ENCODE measurements at regions of chr2 and their contacts with region 1.

Region 1: GRCh38 chr2:239401067-239401880 is 454 bp upstream of the HDAC4 start:
- DNase-seq: peak; percentile 99
- H3K4me3 ChIP-seq: peak overlapping the region; percentile 67 to 75 (median 71)
- H3K27ac ChIP-seq: peak overlapping the region; percentile 100
- H3K4me1 ChIP-seq: peaks cover 14% of the 10 kb centered on the region
- H3K27me3 ChIP-seq: no peaks in the 10 kb centered on the region
- CTCF ChIP-seq: no peak
- POLR2A ChIP-seq: peak; percentile 97

Region 2: DNA sequence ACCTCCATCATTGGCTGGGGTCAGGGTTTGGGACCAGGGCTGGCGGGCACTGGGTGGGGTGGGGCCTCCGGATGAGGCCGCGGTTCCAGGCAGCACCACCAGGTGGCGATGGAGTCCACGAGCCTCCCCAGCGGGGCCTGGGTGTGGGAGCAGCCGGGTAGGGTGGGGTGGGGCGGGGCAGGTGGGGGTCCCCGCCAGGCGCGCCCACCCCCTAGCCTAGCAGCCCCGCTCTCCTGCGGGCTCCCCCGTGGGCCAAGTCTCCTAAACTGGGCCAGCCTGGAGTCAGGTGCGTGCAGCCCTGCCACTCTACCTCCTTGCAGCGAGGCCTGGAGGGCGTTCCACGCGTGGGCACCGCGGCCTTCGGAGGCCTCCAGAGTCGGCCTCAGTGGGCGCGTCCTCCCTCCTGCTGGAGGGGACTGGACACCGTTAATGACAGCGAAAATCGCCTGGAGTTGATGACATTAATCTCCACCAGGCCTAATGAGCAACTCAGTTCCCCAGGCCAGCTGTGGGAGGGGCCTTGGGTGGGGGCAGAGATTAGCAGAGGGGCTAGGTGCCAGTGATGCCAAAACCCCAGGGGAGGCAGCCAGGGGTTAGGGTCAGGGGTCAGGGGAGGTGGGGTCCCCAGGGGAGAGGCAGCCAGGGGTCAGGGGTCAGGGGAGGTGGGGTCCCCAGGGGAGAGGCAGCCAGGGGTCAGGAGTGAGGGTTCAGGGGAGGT is 365.8 kb before region 1 on chr2:
- CTCF ChIA-PET with region 1: no interaction called
- POLR2A ChIA-PET with region 1: no interaction called
- dilution Hi-C with region 1: no loop called
- intact Hi-C with region 1: loop called (anchors 10 kb)
- DNase-seq: no peak
- H3K4me3 ChIP-seq: no peak overlapping the region
- H3K27ac ChIP-seq: no peak overlapping the region
- H3K4me1 ChIP-seq: no peaks in the 10 kb centered on the region
- H3K27me3 ChIP-seq: peaks cover 0 to 3% of the 10 kb centered on the region in 2 experiments
- CTCF ChIP-seq: peak; percentile 38 to 92
- POLR2A ChIP-seq: no peak

Region 3: DNA sequence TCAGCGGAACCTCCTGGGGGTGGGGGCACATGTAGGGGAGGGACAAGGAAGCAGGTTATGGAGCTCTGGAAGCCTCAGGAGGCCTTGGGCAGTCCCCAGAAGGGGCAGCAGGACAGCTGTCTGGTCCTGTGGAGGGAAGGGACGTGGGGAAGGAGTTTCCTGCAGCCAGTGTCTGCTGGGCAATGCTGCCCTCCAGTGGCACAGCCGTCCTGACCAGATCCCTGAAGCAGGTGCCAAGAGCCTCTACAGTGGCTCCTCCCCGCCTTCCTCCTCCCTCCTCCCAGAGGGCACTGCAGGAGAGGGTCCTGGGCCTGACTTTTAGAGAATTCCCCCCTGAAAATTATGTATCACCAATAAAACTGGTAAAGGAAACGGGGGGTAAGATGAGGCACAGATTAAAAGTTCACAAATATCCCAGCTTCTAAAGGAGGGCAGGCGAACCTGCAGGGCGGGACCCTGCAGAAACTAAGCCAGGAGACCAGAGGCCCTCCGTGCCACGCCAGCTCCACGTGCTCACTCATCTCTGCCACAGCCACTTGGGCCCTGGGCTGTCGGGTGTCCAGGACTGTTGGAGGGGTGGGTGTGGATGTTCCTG is 294.9 kb before region 1 on chr2:
- CTCF ChIA-PET with region 1: no interaction called
- POLR2A ChIA-PET with region 1: no interaction called
- dilution Hi-C with region 1: no loop called
- intact Hi-C with region 1: no loop called
- DNase-seq: peak; percentile 59
- H3K4me3 ChIP-seq: no peak overlapping the region
- H3K27ac ChIP-seq: no peak overlapping the region
- H3K4me1 ChIP-seq: no peaks in the 10 kb centered on the region
- H3K27me3 ChIP-seq: no peaks in the 10 kb centered on the region
- CTCF ChIP-seq: peak; percentile 42 to 80
- POLR2A ChIP-seq: no peak

Region 4: DNA sequence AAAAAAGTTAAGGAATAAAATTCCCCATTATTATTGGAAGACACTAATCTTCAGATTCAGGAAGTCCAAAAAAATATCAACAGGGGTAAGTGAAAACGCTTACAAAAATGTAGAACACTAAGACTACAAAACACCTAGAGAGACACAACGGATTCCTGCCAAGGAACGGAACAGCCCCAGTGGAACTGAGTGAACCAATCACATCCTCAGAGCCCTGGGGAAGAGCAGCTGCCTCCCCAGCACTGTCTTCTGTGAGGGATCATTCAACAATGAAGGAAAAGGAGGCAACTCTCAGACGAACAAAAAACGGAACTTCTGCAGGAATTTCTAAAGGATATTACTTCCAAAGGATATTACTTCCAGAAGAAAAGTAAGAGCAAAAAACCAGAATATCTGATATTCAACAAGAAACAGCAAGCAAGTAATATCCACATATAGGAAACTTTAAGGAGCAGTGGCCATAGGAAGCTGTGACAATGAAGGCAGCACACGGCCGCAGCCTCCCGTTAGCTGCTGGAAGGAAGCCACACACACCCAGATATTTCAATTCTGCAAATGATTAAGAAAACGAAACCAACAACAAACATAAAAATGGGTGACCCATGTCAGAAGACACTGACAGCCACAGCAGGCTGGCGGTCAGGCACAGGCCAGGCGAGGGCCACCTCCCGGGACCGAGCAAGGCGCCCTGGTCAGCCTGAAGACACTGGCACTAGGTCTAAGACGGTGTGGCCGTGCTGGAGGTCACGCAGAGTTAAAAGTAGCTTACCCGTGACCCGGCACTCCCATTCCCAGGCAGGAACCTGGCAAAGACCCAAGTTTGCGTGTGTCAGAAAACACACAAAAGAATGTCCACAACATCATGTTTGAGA is 82.2 kb before region 1 on chr2:
- CTCF ChIA-PET with region 1: no interaction called
- POLR2A ChIA-PET with region 1: interaction called, 4 read pairs
- dilution Hi-C with region 1: no loop called
- intact Hi-C with region 1: loop called (anchors 2 kb)
- DNase-seq: peak; percentile 78
- H3K4me3 ChIP-seq: peak overlapping the region; percentile 15 to 50 (median 30)
- H3K27ac ChIP-seq: peak overlapping the region; percentile 36
- H3K4me1 ChIP-seq: peaks cover 25% of the 10 kb centered on the region
- H3K27me3 ChIP-seq: no peaks in the 10 kb centered on the region
- CTCF ChIP-seq: no peak
- POLR2A ChIP-seq: no peak

Region 5: DNA sequence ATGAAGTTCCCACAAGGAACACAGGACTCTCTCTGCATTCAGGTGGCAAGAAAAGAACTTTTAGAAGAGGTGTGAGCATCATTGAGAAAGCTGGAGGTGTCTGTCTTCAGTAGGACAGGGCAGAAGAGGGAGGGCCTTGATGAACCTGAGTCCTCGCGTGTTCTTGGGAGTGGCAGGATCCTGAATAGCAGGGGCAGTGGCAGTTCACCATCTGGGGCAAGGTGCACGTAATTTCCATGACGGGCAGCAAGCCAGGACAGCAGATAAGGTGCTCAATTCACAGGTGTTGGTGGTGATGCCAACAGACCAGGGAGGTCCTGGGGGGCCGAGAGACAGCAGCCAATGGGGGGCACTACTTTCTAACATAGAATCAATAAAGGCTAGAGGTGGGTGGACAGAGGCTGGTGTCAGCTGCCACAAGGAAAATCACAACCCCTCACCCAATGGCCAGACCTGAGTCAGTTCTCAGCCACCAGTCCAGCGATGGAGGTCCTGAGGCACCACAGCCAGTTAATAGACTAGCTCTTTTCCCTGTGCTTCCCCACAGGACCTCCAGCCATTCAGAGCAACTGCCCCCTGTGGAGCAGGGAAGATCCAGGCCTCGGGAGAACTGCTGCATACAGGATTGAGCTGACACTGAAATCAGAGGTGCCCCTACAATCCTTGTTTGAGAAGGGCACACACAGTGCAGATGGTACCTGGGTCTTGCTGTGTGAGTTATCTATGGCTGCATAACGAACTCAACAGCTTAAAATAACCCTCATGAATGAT is 10.5 kb after region 1 on chr2:
- CTCF ChIA-PET with region 1: no interaction called
- POLR2A ChIA-PET with region 1: no interaction called
- dilution Hi-C with region 1: no loop called
- intact Hi-C with region 1: no loop called
- DNase-seq: no peak
- H3K4me3 ChIP-seq: no peak overlapping the region
- H3K27ac ChIP-seq: no peak overlapping the region
- H3K4me1 ChIP-seq: no peaks in the 10 kb centered on the region
- H3K27me3 ChIP-seq: no peaks in the 10 kb centered on the region
- CTCF ChIP-seq: no peak
- POLR2A ChIP-seq: no peak

Region 6: DNA sequence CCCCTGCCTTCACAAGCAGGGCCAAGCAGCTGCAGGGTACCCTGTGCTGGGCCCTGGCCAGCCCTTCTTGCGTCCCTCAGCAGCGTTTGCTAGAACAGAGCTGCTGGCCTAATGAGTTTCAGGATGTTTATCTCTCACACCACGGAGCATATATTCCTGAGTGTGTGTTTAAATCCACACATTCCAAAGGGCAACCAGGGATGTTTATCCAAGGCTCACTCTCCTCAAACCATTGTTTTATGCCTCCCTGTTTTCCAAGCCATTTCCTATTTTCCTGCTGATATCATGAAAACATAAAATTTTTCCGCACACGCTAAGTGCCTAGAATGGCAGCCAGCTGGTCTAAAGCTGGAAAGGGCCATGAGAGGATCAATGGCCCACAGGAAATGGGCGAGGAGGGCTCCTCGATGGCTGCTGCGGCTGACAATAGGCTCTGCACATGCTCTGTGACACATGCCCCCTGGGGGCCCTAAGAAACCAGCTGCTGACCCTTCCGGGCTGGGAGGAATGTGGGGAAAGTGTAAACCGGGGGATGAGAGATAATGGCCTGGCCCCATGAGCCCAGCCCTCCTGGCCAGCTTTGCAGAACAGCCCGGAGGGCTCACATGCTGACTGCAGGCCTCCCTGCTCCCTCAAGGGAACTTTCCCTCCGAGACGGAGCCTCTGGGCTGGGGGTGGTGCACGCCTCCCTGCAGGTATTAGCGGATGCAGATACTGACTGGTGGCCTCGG is 429.9 kb after region 1 on chr2:
- CTCF ChIA-PET with region 1: no interaction called
- POLR2A ChIA-PET with region 1: no interaction called
- dilution Hi-C with region 1: no loop called
- intact Hi-C with region 1: loop called (anchors 1 kb)
- DNase-seq: peak; percentile 67
- H3K4me3 ChIP-seq: no peak overlapping the region
- H3K27ac ChIP-seq: peak overlapping the region; percentile 59
- H3K4me1 ChIP-seq: peaks cover 12% of the 10 kb centered on the region
- H3K27me3 ChIP-seq: no peaks in the 10 kb centered on the region
- CTCF ChIP-seq: no peak
- POLR2A ChIP-seq: no peak

Region 7: DNA sequence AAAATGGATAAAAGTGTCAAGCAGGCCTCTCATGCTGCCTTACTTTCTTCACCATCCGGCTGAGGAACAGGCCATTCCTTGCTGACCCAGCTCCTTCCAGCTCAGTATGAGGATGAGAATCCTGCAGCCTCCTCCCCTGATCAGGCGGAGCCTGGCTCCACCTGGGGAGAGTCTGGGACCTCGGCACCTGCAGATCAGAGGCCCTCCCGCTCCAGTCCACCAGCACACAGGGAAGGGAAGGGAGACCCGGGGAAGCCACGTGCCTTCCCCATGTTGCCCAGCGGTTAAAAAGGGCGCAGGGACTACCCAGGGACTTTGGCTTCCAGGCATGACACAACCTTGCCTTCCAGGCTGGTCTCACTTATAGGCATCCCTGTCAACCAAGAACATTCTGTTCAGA is 451.8 kb after region 1 on chr2:
- CTCF ChIA-PET with region 1: no interaction called
- POLR2A ChIA-PET with region 1: no interaction called
- dilution Hi-C with region 1: no loop called
- intact Hi-C with region 1: no loop called
- DNase-seq: no peak
- H3K4me3 ChIP-seq: no peak overlapping the region
- H3K27ac ChIP-seq: no peak overlapping the region
- H3K4me1 ChIP-seq: no peaks in the 10 kb centered on the region
- H3K27me3 ChIP-seq: no peaks in the 10 kb centered on the region
- CTCF ChIP-seq: no peak
- POLR2A ChIP-seq: no peak

Region 8: DNA sequence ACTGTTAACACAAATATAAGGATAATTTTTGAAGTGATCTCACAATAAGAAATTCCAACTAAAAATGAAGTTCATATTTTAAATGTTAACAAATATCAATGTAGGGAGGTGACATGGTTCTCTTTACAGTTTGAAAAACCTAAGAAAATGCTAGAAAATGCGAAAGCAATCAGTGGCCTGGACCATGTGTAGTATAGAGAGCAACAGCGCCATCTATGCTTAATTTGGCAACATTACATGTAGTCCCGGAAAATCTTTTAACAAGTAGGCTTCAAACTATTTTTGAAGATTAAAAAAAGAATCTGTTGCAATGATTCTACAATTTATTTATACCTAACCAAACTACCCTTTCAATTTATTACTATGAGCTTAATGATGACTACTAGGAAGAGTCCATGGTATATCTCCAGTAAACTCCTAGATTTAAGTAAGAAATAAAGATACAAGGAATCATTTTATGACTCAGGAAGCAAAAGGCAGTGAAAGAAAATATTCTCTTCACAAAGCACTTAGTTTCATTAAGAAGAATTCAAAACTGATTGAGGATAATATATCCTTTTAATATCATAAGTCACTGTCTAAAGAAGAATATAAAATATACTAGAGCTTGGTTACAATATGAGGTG is 590.5 kb after region 1 on chr2:
- CTCF ChIA-PET with region 1: no interaction called
- POLR2A ChIA-PET with region 1: no interaction called
- dilution Hi-C with region 1: no loop called
- intact Hi-C with region 1: loop called (anchors 5 kb)
- DNase-seq: peak; percentile 64
- H3K4me3 ChIP-seq: no peak overlapping the region
- H3K27ac ChIP-seq: no peak overlapping the region
- H3K4me1 ChIP-seq: no peaks in the 10 kb centered on the region
- H3K27me3 ChIP-seq: no peaks in the 10 kb centered on the region
- CTCF ChIP-seq: peak; percentile 60 to 61
- POLR2A ChIP-seq: no peak

Measured in endothelial cell of umbilical vein (primary cell).